ENCODE measurements at regions of chr11 and their contacts with region 1.

Region 1: GRCh38 chr11:64358907-64359711 is at the start of gene RPS6KA4:
- DNase-seq: peak in 2 of 3 donors; percentile 48 to 63
- H3K4me3 ChIP-seq: peak within 1 kb of the TSS; percentile 52 to 86 (median 75)
- H3K27ac ChIP-seq: peak within 1 kb of the TSS in 1 of 2 experiments; percentile 70
- H3K4me1 ChIP-seq: peaks cover 2 to 82% (median 51%) of the 10 kb centered on the region in 4 experiments
- H3K27me3 ChIP-seq: no peaks in the 10 kb centered on the region

Region 2: DNA sequence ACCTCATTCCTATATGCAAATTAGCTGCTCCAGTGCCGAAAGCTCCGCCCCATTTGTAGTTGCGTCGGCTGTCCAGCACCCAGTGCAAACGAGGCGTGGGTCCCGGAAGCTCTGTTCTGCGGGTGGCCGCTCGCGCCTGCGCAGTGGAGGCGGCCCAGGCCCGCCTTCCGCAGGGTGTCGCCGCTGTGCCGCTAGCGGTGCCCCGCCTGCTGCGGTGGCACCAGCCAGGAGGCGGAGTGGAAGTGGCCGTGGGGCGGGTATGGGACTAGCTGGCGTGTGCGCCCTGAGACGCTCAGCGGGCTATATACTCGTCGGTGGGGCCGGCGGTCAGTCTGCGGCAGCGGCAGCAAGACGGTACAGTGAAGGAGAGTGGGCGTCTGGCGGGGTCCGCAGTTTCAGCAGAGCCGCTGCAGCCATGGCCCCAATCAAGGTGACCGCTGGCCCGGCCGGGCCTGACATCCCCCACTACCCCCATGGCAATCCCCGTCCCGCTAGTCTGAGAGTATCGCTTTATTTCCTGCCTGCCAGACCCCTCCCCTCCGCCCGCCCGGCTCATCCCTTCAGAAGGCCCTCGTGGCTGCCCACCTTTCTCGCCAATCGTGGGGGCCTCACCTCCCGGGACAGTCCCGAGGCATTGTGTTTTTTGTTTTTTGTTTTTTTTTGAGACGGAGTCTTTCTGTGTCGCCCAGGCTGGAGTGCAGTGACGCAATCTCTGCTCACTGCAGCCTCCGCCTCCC is 41.0 kb before region 1 on chr11 and contains the start of gene PRDX5:
- CTCF ChIA-PET with region 1: interaction called, 52 read pairs
- POLR2A ChIA-PET with region 1: interaction called, 11 read pairs
- DNase-seq: peak; percentile 95 to 98 (median 98)
- H3K4me3 ChIP-seq: peak within 1 kb of the TSS; percentile 64 to 91 (median 86)
- H3K27ac ChIP-seq: peak within 1 kb of the TSS; percentile 87 to 95
- H3K4me1 ChIP-seq: peaks cover 0 to 29% (median 27%) of the 10 kb centered on the region in 4 experiments
- H3K27me3 ChIP-seq: no peaks in the 10 kb centered on the region

Region 3: DNA sequence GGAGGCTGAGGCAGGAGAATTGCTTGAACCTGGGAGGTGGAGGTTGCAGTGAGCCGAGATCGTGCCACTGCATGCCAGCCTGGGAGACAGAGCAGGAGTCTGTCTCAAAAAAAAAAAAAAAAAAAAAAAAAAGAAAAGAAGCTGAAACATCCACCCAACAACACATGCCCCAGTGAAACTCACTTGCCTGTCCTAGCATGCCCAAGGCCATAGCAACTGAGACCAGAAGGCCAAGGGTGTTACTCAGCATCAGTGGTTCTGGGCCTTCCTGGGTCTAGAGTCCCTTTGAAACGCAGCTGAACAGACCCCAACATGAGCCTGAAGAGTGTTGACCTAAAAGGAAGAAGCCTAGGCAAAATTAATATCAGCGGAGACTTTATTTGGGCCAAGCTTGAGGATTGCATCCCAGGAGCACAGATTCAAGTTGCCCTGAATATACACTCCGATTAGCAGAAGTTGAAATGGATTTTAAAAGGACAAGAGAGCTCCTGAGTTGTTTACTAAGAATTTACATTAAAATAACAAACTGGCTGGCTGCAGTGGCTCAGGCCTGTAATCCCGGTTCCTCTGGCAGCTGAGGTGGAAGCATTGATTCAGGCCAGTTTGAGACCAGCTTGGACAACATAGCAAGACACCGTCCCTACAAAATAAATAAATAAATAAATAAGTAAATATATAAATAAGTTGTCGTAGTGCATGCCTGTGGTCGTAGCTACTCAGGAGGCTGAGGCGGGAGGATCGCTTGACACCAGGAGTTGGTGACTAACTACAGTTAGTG is 34.2 kb before region 1 on chr11:
- CTCF ChIA-PET with region 1: interaction called, 136 read pairs
- POLR2A ChIA-PET with region 1: no interaction called
- DNase-seq: no peak
- H3K4me3 ChIP-seq: no peak overlapping the region
- H3K27ac ChIP-seq: no peak overlapping the region
- H3K4me1 ChIP-seq: peaks cover 0 to 13% (median 0%) of the 10 kb centered on the region in 4 experiments
- H3K27me3 ChIP-seq: no peaks in the 10 kb centered on the region

Region 4: GRCh38 chr11:64331557-64332371 is 27.3 kb before region 1 on chr11:
- CTCF ChIA-PET with region 1: interaction called, 136 read pairs
- POLR2A ChIA-PET with region 1: interaction called, 6 read pairs
- DNase-seq: peak; percentile 94 to 98 (median 97)
- H3K4me3 ChIP-seq: peak overlapping the region in 3 of 7 experiments; percentile 8 to 36 (median 15)
- H3K27ac ChIP-seq: peak overlapping the region in 1 of 2 experiments; percentile 27
- H3K4me1 ChIP-seq: peaks cover 0 to 40% (median 20%) of the 10 kb centered on the region in 4 experiments
- H3K27me3 ChIP-seq: no peaks in the 10 kb centered on the region

Region 5: GRCh38 chr11:64341851-64342791 is 17.0 kb before region 1 on chr11:
- CTCF ChIA-PET with region 1: interaction called, 154 read pairs
- POLR2A ChIA-PET with region 1: interaction called, 4 read pairs
- DNase-seq: peak; percentile 88 to 93 (median 92)
- H3K4me3 ChIP-seq: peak overlapping the region in 3 of 7 experiments; percentile 4 to 62 (median 45)
- H3K27ac ChIP-seq: peak overlapping the region in 1 of 2 experiments; percentile 58
- H3K4me1 ChIP-seq: peaks cover 5 to 44% (median 35%) of the 10 kb centered on the region in 4 experiments
- H3K27me3 ChIP-seq: no peaks in the 10 kb centered on the region

Region 6: GRCh38 chr11:64372802-64373597 is 13.9 kb after region 1 on chr11:
- CTCF ChIA-PET with region 1: interaction called, 10 read pairs
- POLR2A ChIA-PET with region 1: no interaction called
- DNase-seq: no peak
- H3K4me3 ChIP-seq: no peak overlapping the region
- H3K27ac ChIP-seq: no peak overlapping the region
- H3K4me1 ChIP-seq: peaks cover 0 to 12% (median 7%) of the 10 kb centered on the region in 4 experiments
- H3K27me3 ChIP-seq: no peaks in the 10 kb centered on the region